Stomach (tissue), 19 donors: ENCODE measurements at regions of chr6 and their contacts with region 1.

Region 1: GRCh38 chr6:53171605-53172446 is 23.2 kb upstream of the GCM1 start:
- DNase-seq: peak; percentile 94
- H3K4me3 ChIP-seq: no peak overlapping the region
- H3K27ac ChIP-seq: no peak overlapping the region
- H3K4me1 ChIP-seq: no peaks in the 10 kb centered on the region
- H3K27me3 ChIP-seq: no peaks in the 10 kb centered on the region
- CTCF ChIP-seq: peak in 6 of 7 experiments; percentile 89 to 100 (median 100)
- EP300 ChIP-seq: no peak
- POLR2A ChIP-seq: no peak

Region 2: GRCh38 chr6:53201270-53201669 is 29.4 kb after region 1 on chr6:
- intact Hi-C with region 1: no loop called
- DNase-seq: no peak
- H3K4me3 ChIP-seq: no peak overlapping the region
- H3K27ac ChIP-seq: no peak overlapping the region
- H3K4me1 ChIP-seq: no peaks in the 10 kb centered on the region
- H3K27me3 ChIP-seq: no peaks in the 10 kb centered on the region
- CTCF ChIP-seq: no peak
- EP300 ChIP-seq: no peak
- POLR2A ChIP-seq: no peak

Region 3: GRCh38 chr6:53284901-53285300 is 113.1 kb after region 1 on chr6:
- intact Hi-C with region 1: loop called (anchors 10 kb)
- DNase-seq: no peak
- H3K4me3 ChIP-seq: no peak overlapping the region
- H3K27ac ChIP-seq: no peak overlapping the region
- H3K4me1 ChIP-seq: peaks cover 0 to 20% (median 13%) of the 10 kb centered on the region in 4 donors
- H3K27me3 ChIP-seq: no peaks in the 10 kb centered on the region
- CTCF ChIP-seq: no peak
- EP300 ChIP-seq: no peak
- POLR2A ChIP-seq: no peak

Region 4: DNA sequence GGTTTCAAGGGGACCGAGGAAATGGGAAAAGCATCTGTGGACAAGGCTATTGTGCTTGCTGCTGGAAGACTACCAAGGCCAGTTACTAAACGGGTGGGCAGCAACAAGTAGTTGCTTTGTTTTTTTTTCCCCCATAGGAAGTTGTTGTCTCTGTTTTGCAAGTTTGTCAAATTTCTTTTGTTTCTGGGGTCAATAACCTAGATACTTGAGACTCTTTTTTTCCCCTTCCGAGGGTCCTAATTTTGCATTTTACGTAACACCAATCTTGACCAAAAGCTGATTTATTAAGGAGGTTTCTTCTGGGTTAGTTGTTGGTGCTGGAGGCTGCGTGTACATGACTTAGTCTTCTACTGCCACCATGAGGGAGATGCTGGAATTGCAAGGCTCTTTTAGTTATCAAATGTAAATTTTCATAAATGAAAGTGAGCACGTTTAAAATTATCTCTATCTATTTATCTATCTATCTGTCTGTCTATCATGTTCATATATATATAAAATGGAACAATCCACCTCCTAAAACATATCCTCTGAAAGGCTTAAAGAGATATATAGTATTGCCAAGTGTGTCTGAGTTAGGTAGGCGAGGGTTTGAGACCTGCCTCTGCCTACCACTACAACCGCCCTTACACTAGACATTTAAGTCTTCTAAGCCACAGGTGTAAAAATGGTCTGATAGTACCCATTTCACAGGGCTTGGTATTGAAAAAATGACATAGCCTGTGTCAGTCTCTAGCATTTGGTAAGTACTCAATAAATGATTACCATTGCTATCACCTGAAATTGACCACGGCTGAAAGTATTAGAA is 312.9 kb after region 1 on chr6:
- intact Hi-C with region 1: loop called (anchors 5 kb)
- DNase-seq: peak; percentile 83 to 87
- H3K4me3 ChIP-seq: no peak overlapping the region
- H3K27ac ChIP-seq: peak overlapping the region in 1 of 5 donors; percentile 0
- H3K4me1 ChIP-seq: peaks cover 0 to 26% (median 4%) of the 10 kb centered on the region in 4 donors
- H3K27me3 ChIP-seq: no peaks in the 10 kb centered on the region
- CTCF ChIP-seq: peak in 5 of 7 experiments; percentile 88 to 98 (median 94)
- EP300 ChIP-seq: no peak
- POLR2A ChIP-seq: no peak